HepG2 (cell line): ENCODE measurements at regions of chr3 and their contacts with region 1.

Region 1: GRCh38 chr3:158790901-158791589 is 10.8 kb upstream of the MFSD1 start:
- DNase-seq: peak; percentile 58
- ATAC-seq: peak; percentile 65
- H3K4me3 ChIP-seq: peak overlapping the region in 2 of 3 experiments; percentile 22; a peak in 1 of 6 replicates
- H3K27ac ChIP-seq: no peak overlapping the region
- H3K4me1 ChIP-seq: 0 out of 2 replicates have a peak, but pooled peaks cover 6% of the 10 kb centered on the region
- H3K27me3 ChIP-seq: no peaks in the 10 kb centered on the region
- CTCF ChIP-seq: peak; percentile 79
- EP300 ChIP-seq: no peak
- POLR2A ChIP-seq: no peak
- RAD21 ChIP-seq: peak; percentile 70; the same call in 1 of the 2 replicates

Region 2: DNA sequence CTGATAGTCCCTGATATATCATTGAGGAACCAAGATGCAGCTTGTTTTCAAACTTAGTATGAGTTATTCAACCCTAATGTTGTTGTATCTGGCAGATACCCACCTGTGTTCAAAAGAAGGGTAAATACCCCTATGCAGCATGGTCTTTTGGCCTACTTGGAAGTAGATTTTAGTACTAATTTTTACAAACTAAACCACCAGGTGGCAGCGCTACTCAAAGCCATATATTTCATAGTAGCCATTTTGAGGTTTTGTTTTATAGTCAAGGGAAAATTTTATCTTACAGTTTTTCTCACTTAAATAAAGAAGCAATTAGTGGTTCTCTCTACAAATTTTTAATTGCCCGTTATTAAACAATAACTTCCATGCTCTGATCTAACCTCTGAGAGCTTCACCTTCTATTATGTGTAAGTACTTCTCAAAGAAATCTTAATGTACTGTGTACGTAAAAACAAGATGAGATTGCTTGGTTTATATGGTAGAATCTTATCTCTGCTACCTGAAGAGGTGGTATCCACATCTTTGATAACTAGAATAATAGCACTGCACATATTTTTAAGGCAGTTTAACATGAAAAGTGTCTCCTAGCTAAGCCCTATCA is 251.5 kb before region 1 on chr3:
- CTCF ChIA-PET with region 1: interaction called, 13 read pairs
- POLR2A ChIA-PET with region 1: no interaction called
- in situ Hi-C with region 1: loop called (anchors 25 kb)
- intact Hi-C with region 1: loop called (anchors 1 kb)
- DNase-seq: peak; percentile 46
- ATAC-seq: peak; percentile 66
- H3K4me3 ChIP-seq: no peak overlapping the region
- H3K27ac ChIP-seq: no peak overlapping the region
- H3K4me1 ChIP-seq: no peaks in the 10 kb centered on the region
- H3K27me3 ChIP-seq: no peaks in the 10 kb centered on the region
- CTCF ChIP-seq: peak; percentile 62
- EP300 ChIP-seq: no peak
- POLR2A ChIP-seq: no peak
- RAD21 ChIP-seq: peak; percentile 21; the same call in 1 of the 2 replicates

Region 3: DNA sequence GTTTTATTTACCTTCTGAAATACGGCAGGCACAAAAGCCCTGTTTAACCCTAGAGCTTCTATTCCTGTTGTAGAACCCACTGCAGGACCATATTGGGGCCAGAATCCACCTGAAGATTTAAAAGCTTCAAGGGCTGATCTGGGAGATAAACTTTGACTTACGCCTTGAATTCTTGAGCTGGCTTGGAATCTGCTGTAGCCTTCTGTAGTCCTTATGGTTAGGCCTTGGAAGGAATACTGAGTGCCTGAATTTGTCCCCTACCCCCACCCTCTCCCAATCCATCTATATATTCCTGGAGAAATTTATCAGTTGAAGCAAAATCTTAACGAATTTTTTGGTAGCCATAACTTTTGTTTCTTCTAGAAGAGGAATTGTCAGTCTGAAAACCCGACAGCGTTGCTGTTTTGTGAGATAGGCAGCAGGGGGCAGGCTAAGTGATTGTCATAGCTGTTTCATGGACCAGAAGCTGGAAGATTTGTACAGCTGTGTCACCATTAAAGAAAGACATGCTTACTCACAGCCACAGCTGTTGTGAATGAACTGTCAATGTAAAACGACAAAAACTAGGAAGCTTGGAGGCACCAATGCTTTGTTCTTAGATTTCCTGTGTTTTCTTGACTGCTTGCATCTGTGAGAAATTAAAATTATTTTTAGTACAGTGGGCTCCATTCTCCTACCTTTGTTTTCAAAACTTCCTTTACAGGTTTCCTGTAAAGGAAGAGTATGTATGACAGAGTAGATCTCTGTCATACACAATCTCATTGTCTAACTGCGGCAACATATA is 131.4 kb before region 1 on chr3:
- CTCF ChIA-PET with region 1: interaction called, 28 read pairs
- POLR2A ChIA-PET with region 1: interaction called, 3 read pairs
- in situ Hi-C with region 1: loop called (anchors 5 kb)
- intact Hi-C with region 1: loop called (anchors 1 kb)
- DNase-seq: peak; percentile 45
- ATAC-seq: peak; percentile 77
- H3K4me3 ChIP-seq: no peak overlapping the region
- H3K27ac ChIP-seq: no peak overlapping the region
- H3K4me1 ChIP-seq: no peaks in the 10 kb centered on the region
- H3K27me3 ChIP-seq: no peaks in the 10 kb centered on the region
- CTCF ChIP-seq: peak; percentile 70
- EP300 ChIP-seq: no peak
- POLR2A ChIP-seq: no peak
- RAD21 ChIP-seq: 0 out of 2 replicates have a peak, but pooled peaks have one; percentile 23

Region 4: DNA sequence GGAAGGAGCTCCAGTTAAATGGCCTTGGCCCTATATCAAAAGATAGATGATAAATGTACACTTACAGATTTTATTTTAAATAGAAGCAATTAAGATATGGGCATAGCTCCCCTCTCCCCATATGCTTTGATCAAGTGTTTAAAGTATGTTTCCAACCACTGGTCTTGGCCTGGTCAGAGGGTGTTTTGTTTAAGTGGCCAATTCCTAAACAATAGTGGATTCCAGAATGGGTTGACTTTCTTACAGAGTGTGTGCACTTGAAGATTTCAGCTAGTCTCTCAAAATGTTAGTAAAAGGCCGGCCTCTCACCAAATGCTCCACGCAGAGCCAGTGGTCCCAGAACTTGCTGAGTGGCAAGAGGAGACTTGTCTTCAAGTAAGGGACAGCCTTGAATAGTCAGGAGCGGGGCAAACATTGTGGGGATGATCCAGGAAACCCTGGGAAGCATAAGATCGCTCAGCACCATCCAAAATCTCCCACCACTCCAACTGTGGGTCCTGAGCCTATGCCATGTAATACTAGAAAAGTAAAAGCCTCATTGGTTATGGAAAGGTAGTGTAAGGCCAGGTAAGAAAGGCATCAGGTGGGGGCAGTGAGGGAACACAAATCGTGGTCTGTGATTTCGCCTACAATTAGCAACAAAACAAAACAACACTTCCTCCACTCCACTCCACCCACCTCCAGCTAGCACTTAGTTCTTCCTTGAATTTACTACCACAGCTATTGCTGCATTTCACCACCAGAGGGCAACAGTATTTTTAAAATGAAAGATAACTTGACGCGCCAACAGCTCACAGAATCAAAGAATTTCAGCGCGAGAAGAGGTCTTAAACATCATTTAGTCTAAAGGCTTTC is 63.6 kb before region 1 on chr3:
- CTCF ChIA-PET with region 1: interaction called, 35 read pairs
- POLR2A ChIA-PET with region 1: interaction called, 6 read pairs
- in situ Hi-C with region 1: loop called (anchors 5 kb)
- intact Hi-C with region 1: loop called (anchors 1 kb)
- DNase-seq: peak; percentile 44
- ATAC-seq: peak; percentile 72
- H3K4me3 ChIP-seq: no peak overlapping the region; a peak in 1 of 6 replicates
- H3K27ac ChIP-seq: no peak overlapping the region
- H3K4me1 ChIP-seq: peaks cover 30% of the 10 kb centered on the region
- H3K27me3 ChIP-seq: no peaks in the 10 kb centered on the region
- CTCF ChIP-seq: peak; percentile 74
- EP300 ChIP-seq: no peak
- POLR2A ChIP-seq: no peak
- RAD21 ChIP-seq: 0 out of 2 replicates have a peak, but pooled peaks have one; percentile 44

Region 5: GRCh38 chr3:158863247-158863646 is 72.2 kb after region 1 on chr3:
- CTCF ChIA-PET with region 1: no interaction called
- POLR2A ChIA-PET with region 1: no interaction called
- in situ Hi-C with region 1: no loop called
- intact Hi-C with region 1: no loop called
- DNase-seq: no peak
- ATAC-seq: no peak
- H3K4me3 ChIP-seq: no peak overlapping the region
- H3K27ac ChIP-seq: no peak overlapping the region
- H3K4me1 ChIP-seq: no peaks in the 10 kb centered on the region
- H3K27me3 ChIP-seq: no peaks in the 10 kb centered on the region
- CTCF ChIP-seq: no peak
- EP300 ChIP-seq: no peak
- POLR2A ChIP-seq: no peak
- RAD21 ChIP-seq: no peak